ENCODE measurements at regions of chr2 and their contacts with region 1.

Region 1: GRCh38 chr2:121088251-121089165 is 196.5 kb downstream of the TFCP2L1 start:
- DNase-seq: no peak
- H3K4me3 ChIP-seq: no peak overlapping the region
- H3K27ac ChIP-seq: no peak overlapping the region
- H3K4me1 ChIP-seq: no peaks in the 10 kb centered on the region
- H3K27me3 ChIP-seq: no peaks in the 10 kb centered on the region; a peak in 2 of 7 replicates
- CTCF ChIP-seq: no peak
- EP300 ChIP-seq: no peak
- POLR2A ChIP-seq: no peak
- RAD21 ChIP-seq: no peak

Region 2: DNA sequence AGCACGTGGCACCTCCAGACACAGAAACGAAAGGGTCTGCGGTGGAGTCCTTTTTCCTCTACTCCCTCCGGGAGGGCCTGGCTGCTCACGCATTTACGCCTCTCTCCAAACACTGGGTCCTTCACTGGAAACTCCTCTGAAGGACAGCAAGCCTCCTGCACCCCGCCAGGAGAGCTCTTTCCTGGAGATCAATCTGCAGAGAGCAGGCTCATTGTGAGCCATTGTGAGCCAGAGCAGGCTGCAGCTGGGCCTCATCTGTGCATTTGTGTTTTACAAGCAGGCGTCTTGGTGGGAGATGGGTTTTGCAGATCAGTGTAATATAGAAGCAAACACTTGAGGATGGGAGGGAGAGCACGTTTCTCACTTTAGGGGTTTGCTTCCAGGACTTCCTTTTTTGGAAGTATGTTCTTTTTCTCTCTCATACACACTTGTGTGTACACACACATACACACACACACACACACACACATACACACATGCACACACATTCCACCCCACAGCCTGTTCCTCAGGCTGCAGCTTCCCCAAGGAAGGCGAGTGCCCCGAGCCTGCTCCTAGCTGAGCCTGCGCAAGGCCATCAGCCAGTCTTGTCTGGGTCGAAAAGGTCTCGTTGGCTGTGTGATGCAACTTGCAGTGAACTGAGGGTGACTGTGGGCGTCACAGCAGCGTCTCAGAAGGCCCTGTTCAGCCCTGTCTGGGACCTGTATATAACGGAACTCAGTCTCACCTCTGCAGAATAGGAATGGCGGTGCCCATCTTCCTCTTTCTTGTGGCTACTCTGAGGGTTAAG is 189.4 kb before region 1 on chr2:
- CTCF ChIA-PET with region 1: no interaction called
- POLR2A ChIA-PET with region 1: no interaction called
- DNase-seq: no peak
- H3K4me3 ChIP-seq: no peak overlapping the region
- H3K27ac ChIP-seq: no peak overlapping the region; the same call in 1 of the 2 replicates
- H3K4me1 ChIP-seq: peaks cover 18 to 44% (median 28%) of the 10 kb centered on the region in 4 experiments
- H3K27me3 ChIP-seq: no peaks in the 10 kb centered on the region; a peak in 1 of 7 replicates
- CTCF ChIP-seq: no peak
- EP300 ChIP-seq: no peak
- POLR2A ChIP-seq: no peak
- RAD21 ChIP-seq: no peak

Region 3: DNA sequence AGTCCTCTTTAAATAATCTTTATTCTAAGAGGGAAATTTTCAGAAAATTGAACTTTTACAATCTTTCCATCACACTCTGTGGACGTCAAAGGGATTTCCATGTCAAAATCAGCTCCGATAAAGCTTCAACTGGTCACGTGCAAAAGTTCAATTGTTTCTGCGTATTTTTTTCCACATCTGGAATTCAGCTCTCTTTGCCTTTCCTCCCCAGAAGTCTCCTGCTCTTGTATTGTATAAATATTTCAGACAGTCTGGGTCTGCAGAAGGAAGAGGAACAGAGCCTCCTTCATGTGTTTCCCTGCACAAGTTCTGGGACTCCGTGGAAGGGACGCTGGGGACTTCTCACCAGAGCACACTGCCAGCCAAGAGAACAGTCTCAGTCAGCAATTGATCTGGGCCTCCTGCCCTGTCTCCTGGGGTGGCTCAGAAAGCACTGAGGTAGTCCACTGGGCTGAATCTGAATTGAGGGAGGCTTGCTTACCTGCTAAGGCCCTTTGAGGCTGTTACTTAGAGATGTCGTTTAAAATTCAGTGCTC is 55.0 kb before region 1 on chr2:
- CTCF ChIA-PET with region 1: no interaction called
- POLR2A ChIA-PET with region 1: no interaction called
- DNase-seq: no peak
- H3K4me3 ChIP-seq: no peak overlapping the region
- H3K27ac ChIP-seq: no peak overlapping the region
- H3K4me1 ChIP-seq: no peaks in the 10 kb centered on the region
- H3K27me3 ChIP-seq: peaks cover 0 to 28% (median 15%) of the 10 kb centered on the region in 4 experiments; a peak in 6 of 7 replicates
- CTCF ChIP-seq: no peak
- EP300 ChIP-seq: no peak
- POLR2A ChIP-seq: no peak
- RAD21 ChIP-seq: no peak

Region 4: DNA sequence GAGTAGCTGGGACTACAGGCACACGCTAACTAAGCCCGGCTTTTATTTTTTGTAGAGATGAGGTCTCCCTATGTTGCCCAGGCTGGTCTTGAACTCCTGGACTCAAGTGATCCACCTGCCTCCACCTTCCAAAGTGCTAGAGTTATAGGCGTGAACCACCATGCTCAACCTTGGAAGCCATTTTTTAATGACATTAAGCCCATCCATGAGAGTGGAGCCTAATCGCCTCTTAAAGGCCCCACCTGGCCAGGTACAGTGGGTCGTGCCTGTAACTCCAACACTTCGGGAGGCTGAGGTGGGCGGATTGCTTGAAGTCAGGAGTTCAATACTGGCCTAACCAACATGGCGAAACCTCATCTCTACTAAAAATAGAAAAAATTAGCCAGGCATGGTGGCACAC is 238.1 kb after region 1 on chr2:
- CTCF ChIA-PET with region 1: interaction called, 11 read pairs
- POLR2A ChIA-PET with region 1: no interaction called
- DNase-seq: no peak
- H3K4me3 ChIP-seq: no peak overlapping the region
- H3K27ac ChIP-seq: no peak overlapping the region
- H3K4me1 ChIP-seq: no peaks in the 10 kb centered on the region
- H3K27me3 ChIP-seq: no peaks in the 10 kb centered on the region
- CTCF ChIP-seq: no peak
- EP300 ChIP-seq: no peak
- POLR2A ChIP-seq: no peak
- RAD21 ChIP-seq: no peak

Measured in H1 (cell line).